ENCODE measurements at regions of chr10 and their contacts with region 1.

Region 1: GRCh38 chr10:27155066-27155754 is at the start of gene MASTL:
- DNase-seq: peak; percentile 93 to 97 (median 96)
- ATAC-seq: peak; percentile 89
- H3K4me3 ChIP-seq: peak within 1 kb of the TSS; percentile 90
- H3K4me3 Mint-ChIP-seq: peak within 1 kb of the TSS; percentile 91 to 100 (median 99)
- H3K27ac ChIP-seq: peak within 1 kb of the TSS; percentile 99
- H3K27ac Mint-ChIP-seq: peak within 1 kb of the TSS; percentile 100
- H3K4me1 ChIP-seq: peaks cover 13 to 17% of the 10 kb centered on the region in 2 donors
- H3K4me1 Mint-ChIP-seq: peaks cover 34 to 60% (median 50%) of the 10 kb centered on the region in 7 donors
- H3K27me3 ChIP-seq: no peaks in the 10 kb centered on the region
- H3K27me3 Mint-ChIP-seq: peaks cover 0 to 2% (median 0%) of the 10 kb centered on the region in 5 donors
- total RNA-seq, gene MASTL: 8.4 to 29.0 (median 20.2) TPM

Region 2: GRCh38 chr10:26242706-26243350 is 912.4 kb before region 1 on chr10:
- CTCF ChIA-PET with region 1: no interaction called
- POLR2A ChIA-PET with region 1: no interaction called
- intact Hi-C with region 1: no loop called
- DNase-seq: no peak
- ATAC-seq: no peak
- H3K4me3 ChIP-seq: no peak overlapping the region
- H3K4me3 Mint-ChIP-seq: no peak overlapping the region
- H3K27ac ChIP-seq: no peak overlapping the region
- H3K27ac Mint-ChIP-seq: no peak overlapping the region
- H3K4me1 ChIP-seq: no peaks in the 10 kb centered on the region
- H3K4me1 Mint-ChIP-seq: peaks cover 0 to under 1% (median 0%) of the 10 kb centered on the region in 7 donors
- H3K27me3 ChIP-seq: no peaks in the 10 kb centered on the region
- H3K27me3 Mint-ChIP-seq: peaks cover 11 to 45% (median 40%) of the 10 kb centered on the region in 5 donors

Region 3: GRCh38 chr10:26665080-26666048 is 489.8 kb before region 1 on chr10:
- CTCF ChIA-PET with region 1: no interaction called
- POLR2A ChIA-PET with region 1: no interaction called
- intact Hi-C with region 1: no loop called
- DNase-seq: no peak
- ATAC-seq: no peak
- H3K4me3 ChIP-seq: no peak overlapping the region
- H3K4me3 Mint-ChIP-seq: no peak overlapping the region
- H3K27ac ChIP-seq: no peak overlapping the region
- H3K27ac Mint-ChIP-seq: peak overlapping the region in 1 of 9 donors; percentile 36
- H3K4me1 ChIP-seq: no peaks in the 10 kb centered on the region
- H3K4me1 Mint-ChIP-seq: peaks cover 0 to 2% (median 0%) of the 10 kb centered on the region in 7 donors
- H3K27me3 ChIP-seq: no peaks in the 10 kb centered on the region
- H3K27me3 Mint-ChIP-seq: peaks cover 0 to 16% (median 8%) of the 10 kb centered on the region in 5 donors

Region 4: GRCh38 chr10:26682931-26683330 is 472.3 kb before region 1 on chr10:
- CTCF ChIA-PET with region 1: no interaction called
- POLR2A ChIA-PET with region 1: no interaction called
- intact Hi-C with region 1: loop called in 1 of 2 experiments (anchors 2 kb)
- DNase-seq: peak in 7 of 9 donors; percentile 65 to 91 (median 85)
- ATAC-seq: peak; percentile 91
- H3K4me3 ChIP-seq: no peak overlapping the region
- H3K4me3 Mint-ChIP-seq: peak overlapping the region in 9 of 10 donors; percentile 26 to 83 (median 71)
- H3K27ac ChIP-seq: peak overlapping the region; percentile 69
- H3K27ac Mint-ChIP-seq: peak overlapping the region in 8 of 9 donors; percentile 94 to 99 (median 97)
- H3K4me1 ChIP-seq: peaks cover 0 to 33% of the 10 kb centered on the region in 2 donors
- H3K4me1 Mint-ChIP-seq: peaks cover 14 to 63% (median 39%) of the 10 kb centered on the region in 7 donors
- H3K27me3 ChIP-seq: no peaks in the 10 kb centered on the region
- H3K27me3 Mint-ChIP-seq: peaks cover 0 to 9% (median 0%) of the 10 kb centered on the region in 5 donors

Region 5: DNA sequence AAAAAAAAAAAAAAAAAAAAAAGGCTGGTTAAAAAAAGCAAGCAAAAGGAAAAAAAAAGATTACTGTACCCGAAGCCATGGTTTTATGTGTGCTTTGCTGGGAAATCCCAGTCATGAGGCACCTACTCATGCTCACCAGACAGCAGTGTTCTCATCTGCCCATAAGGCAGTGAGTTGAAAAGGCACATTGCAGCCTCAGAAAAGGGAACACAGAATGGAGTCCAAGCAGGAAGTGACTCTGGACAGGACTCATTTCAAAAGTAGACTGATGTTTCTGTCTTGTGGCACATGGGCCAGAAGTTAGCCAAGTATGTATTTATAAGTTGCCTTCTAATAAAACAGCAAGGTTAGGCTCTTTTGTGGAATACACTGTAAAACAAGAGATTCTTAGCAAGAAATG is 417.5 kb before region 1 on chr10:
- CTCF ChIA-PET with region 1: no interaction called
- POLR2A ChIA-PET with region 1: no interaction called
- intact Hi-C with region 1: loop called in 1 of 2 experiments (anchors 5 kb)
- DNase-seq: peak in 1 of 9 donors; percentile 51
- ATAC-seq: peak; percentile 84
- H3K4me3 ChIP-seq: no peak overlapping the region
- H3K4me3 Mint-ChIP-seq: peak overlapping the region in 1 of 10 donors; percentile 7
- H3K27ac ChIP-seq: no peak overlapping the region
- H3K27ac Mint-ChIP-seq: peak overlapping the region in 7 of 9 donors; percentile 46 to 89 (median 69)
- H3K4me1 ChIP-seq: no peaks in the 10 kb centered on the region
- H3K4me1 Mint-ChIP-seq: peaks cover 0 to 59% (median 0%) of the 10 kb centered on the region in 7 donors
- H3K27me3 ChIP-seq: no peaks in the 10 kb centered on the region
- H3K27me3 Mint-ChIP-seq: no peaks in the 10 kb centered on the region

Region 6: GRCh38 chr10:26799342-26799741 is 355.9 kb before region 1 on chr10:
- CTCF ChIA-PET with region 1: no interaction called
- POLR2A ChIA-PET with region 1: no interaction called
- intact Hi-C with region 1: no loop called
- DNase-seq: peak in 7 of 9 donors; percentile 27 to 48 (median 39)
- ATAC-seq: no peak
- H3K4me3 ChIP-seq: no peak overlapping the region
- H3K4me3 Mint-ChIP-seq: peak overlapping the region; percentile 2 to 81 (median 53)
- H3K27ac ChIP-seq: no peak overlapping the region
- H3K27ac Mint-ChIP-seq: peak overlapping the region in 5 of 9 donors; percentile 18 to 82 (median 54)
- H3K4me1 ChIP-seq: peaks cover 18 to 20% of the 10 kb centered on the region in 2 donors
- H3K4me1 Mint-ChIP-seq: peaks cover 27 to 81% (median 72%) of the 10 kb centered on the region in 7 donors
- H3K27me3 ChIP-seq: no peaks in the 10 kb centered on the region
- H3K27me3 Mint-ChIP-seq: no peaks in the 10 kb centered on the region

Region 7: DNA sequence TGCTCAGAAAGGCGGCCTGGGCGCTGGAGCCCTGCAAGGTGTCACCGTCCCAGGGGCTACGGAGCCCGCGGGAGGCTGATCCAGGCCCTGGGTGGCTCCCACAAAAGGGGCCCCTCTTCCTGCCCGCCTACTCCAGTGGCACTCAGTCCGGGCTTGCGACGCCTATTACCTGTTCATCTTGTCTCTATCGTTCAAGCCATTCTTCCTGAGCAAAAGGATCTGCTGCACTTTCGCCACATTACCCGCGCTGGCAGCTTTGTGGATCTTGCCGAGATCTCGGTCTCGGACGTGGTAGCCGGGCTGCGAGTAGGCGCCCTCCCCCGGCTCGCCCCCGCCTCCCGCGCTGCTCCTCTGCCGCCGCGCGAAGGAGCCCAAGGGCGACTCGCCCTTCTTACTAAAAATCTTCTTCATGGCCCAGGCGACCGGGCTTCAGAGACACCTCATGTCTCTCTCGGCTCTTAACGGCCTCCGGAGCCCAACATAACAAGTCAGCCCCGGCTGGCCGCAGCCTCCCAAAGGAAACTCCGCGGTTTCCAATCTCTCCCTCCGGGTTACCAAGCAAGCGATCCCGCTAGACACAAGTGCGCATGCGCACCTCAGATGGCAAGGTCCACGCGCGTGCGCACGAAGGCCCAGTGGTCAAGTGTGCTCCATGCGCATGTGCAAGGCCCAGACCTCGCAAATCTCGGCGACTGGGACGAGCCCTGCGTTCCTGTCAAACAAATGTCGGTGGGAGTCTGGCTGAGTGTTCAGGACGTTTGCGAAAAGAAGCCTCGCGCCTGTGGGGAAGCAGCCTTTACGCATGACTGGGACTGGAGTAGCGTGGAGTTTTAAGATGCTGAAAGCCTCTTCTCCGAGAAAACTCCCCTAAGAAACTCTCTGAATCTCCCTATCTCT is 55.0 kb before region 1 on chr10 and contains the start of gene ANKRD26:
- CTCF ChIA-PET with region 1: interaction called, 3 read pairs
- POLR2A ChIA-PET with region 1: interaction called, 43 read pairs
- intact Hi-C with region 1: loop called (anchors 1 kb)
- DNase-seq: peak; percentile 92 to 97 (median 95)
- ATAC-seq: peak; percentile 76
- H3K4me3 ChIP-seq: peak within 1 kb of the TSS; percentile 89
- H3K4me3 Mint-ChIP-seq: peak within 1 kb of the TSS; percentile 86 to 97 (median 92)
- H3K27ac ChIP-seq: peak within 1 kb of the TSS; percentile 84
- H3K27ac Mint-ChIP-seq: peak within 1 kb of the TSS; percentile 92 to 99 (median 98)
- H3K4me1 ChIP-seq: peaks cover 18 to 28% of the 10 kb centered on the region in 2 donors
- H3K4me1 Mint-ChIP-seq: peaks cover 30 to 64% (median 51%) of the 10 kb centered on the region in 7 donors
- H3K27me3 ChIP-seq: no peaks in the 10 kb centered on the region
- H3K27me3 Mint-ChIP-seq: peaks cover 0 to 2% (median 0%) of the 10 kb centered on the region in 5 donors
- total RNA-seq, gene ANKRD26: 6.4 to 14.2 (median 8.9) TPM

Region 8: DNA sequence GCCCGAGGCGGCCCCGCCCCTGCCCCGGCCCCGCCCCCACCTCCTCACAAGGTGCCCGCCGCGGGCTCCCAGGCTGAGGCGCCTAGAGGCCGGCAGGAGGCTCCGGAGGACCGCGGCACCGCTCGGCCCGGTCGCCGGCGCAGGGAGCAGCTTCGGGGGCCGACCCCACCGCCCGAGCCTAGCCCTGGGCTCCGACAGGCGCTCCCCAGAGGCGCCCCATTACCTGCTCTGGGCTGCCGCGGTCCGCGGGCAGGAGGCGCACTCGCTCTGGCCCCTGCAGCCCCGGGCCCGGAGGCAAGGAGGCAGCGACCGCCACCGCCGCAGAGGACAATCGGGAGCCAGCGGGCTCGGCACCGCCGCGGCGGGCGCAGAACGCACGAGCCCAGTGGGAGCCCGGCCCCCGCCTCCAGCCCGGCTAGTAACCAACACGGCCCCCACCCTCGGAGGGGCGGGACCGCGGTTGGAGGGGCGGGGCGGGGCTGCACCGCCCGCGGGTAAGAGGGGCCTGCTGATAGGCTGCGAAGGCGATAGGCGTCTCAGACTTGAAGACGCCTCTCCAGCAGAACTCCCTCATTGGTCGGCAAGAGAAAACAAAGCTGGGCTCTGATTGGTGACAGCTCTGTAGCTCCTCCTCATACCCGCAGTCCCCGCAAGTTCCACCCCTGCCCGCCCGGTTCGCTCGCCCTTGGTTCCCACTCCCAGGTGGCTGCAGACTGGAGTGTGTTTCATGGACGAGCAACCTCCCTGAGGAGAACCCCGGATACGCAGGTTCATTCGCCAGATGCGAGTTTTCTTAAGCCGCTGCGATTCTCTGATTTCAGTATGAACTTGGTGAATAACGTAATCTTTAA is 1147.7 kb after region 1 on chr10 and contains the start of gene MPP7:
- CTCF ChIA-PET with region 1: no interaction called
- POLR2A ChIA-PET with region 1: no interaction called
- intact Hi-C with region 1: loop called in 1 of 2 experiments (anchors 1 kb)
- DNase-seq: peak; percentile 96 to 98 (median 97)
- ATAC-seq: peak; percentile 97
- H3K4me3 ChIP-seq: peak within 1 kb of the TSS; percentile 92
- H3K4me3 Mint-ChIP-seq: peak within 1 kb of the TSS; percentile 85 to 99 (median 93)
- H3K27ac ChIP-seq: peak within 1 kb of the TSS; percentile 86
- H3K27ac Mint-ChIP-seq: peak within 1 kb of the TSS; percentile 67 to 98 (median 94)
- H3K4me1 ChIP-seq: peaks cover 8 to 42% of the 10 kb centered on the region in 2 donors
- H3K4me1 Mint-ChIP-seq: peaks cover 27 to 80% (median 67%) of the 10 kb centered on the region in 7 donors
- H3K27me3 ChIP-seq: no peaks in the 10 kb centered on the region
- H3K27me3 Mint-ChIP-seq: peaks cover 0 to 51% (median 0%) of the 10 kb centered on the region in 5 donors
- total RNA-seq, gene MPP7: 9.7 to 44.7 (median 36.1) TPM

Region 9: DNA sequence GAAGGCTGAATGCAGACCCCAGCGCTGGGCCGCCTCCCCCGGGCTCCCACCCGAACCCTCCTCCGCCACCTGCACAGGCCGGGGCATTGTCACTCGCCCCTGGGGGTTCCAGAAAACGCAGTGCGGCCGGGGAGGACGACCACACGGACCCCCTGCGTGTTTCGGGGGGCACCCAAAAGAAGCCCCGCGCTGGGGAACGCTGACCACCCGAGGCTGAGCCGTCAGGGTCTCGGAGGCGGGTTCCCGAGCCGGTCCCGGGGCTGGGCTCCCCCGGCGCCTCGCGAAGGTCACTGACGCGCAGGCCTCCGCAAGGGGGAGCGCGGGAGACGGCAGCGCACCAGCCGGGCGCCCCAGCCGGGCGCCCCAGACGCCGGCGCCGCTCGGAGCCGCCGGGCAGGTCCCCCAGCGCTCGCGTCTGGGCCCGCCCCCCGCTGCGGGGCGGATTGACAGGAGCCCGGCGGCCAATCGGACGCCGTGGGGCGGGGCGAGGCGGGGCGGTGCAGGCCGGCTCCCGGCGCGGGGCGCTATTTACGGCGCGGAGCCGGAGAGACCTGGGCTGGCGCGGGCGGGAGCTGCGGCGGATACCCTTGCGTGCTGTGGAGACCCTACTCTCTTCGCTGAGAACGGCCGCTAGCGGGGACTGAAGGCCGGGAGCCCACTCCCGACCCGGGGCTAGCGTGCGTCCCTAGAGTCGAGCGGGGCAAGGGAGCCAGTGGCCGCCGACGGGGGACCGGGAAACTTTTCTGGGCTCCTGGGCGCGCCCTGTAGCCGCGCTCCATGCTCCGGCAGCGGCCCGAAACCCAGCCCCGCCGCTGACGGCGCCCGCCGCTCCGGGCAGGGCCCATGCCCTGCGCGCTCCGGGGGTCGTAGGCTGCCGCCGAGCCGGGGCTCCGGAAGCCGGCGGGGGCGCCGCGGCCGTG is 1522.0 kb after region 1 on chr10 and contains the start of gene BAMBI:
- CTCF ChIA-PET with region 1: no interaction called
- POLR2A ChIA-PET with region 1: no interaction called
- intact Hi-C with region 1: loop called in 1 of 2 experiments (anchors 2 kb)
- DNase-seq: peak; percentile 86 to 95 (median 90)
- ATAC-seq: peak; percentile 97
- H3K4me3 ChIP-seq: peak within 1 kb of the TSS; percentile 57
- H3K4me3 Mint-ChIP-seq: peak within 1 kb of the TSS; percentile 79 to 94 (median 84)
- H3K27ac ChIP-seq: no peak within 1 kb of the TSS
- H3K27ac Mint-ChIP-seq: peak within 1 kb of the TSS in 3 of 9 donors; percentile 24 to 52 (median 43)
- H3K4me1 ChIP-seq: peaks cover 0 to 26% of the 10 kb centered on the region in 2 donors
- H3K4me1 Mint-ChIP-seq: peaks cover 19 to 32% (median 26%) of the 10 kb centered on the region in 7 donors
- H3K27me3 ChIP-seq: peaks cover 11 to 20% of the 10 kb centered on the region in 2 donors
- H3K27me3 Mint-ChIP-seq: peaks cover 63 to 80% (median 70%) of the 10 kb centered on the region in 5 donors
- total RNA-seq, gene BAMBI: 0.12 to 1.6 (median 0.80) TPM in 4 of 5 experiments, not detected in the other